ENCODE measurements at regions of chr17 and their contacts with region 1.

Region 1: DNA sequence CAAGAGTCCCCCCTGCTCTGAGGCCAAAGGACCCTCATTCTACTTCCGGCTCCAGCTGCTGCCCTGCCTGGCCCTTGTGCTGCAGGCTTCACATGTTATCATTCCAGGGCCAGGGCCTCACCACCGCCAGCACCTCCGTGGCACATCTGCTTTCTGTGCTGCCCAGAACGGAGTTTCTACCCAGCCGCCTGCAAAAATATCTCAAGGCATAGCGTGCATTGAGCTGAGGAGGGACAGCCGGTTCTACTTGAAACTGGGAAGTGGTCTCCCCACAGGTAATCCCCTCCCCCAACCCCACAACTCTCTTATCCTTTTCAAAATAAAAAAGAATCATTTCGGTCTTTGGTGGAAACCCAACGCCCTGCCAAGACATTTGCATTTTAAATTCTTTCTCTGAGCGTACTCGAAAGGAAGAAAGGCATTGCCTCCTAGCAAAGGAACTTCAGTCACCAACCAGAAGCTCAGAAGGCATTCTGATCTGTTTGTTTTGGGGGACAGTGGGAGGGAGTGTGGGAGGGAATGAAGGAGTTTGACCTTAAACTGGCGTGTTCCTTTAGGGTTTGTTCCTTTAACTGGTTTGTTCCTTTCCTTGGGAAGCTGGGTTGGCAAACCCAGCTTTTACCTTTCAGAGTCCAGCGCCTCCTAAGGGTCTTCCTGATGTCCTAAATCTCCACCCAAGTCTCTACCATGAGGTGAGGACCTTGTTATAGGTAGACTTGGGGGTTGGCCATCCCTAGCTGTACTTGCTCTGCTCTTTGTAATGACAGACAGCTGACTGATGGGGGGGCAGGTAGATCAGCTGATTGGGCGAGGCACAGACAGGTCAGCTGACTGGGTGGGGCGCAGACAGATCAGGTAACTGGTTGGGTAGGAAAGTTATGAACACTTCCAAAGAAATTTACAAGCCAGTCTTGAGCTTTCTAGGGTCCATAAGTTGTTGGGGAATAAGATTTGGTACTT is 33.4 kb upstream of the PIK3R6 start:
- DNase-seq: no peak
- H3K4me3 ChIP-seq: no peak overlapping the region
- H3K27ac ChIP-seq: no peak overlapping the region
- H3K4me1 ChIP-seq: no peaks in the 10 kb centered on the region
- H3K27me3 ChIP-seq: no peaks in the 10 kb centered on the region
- CTCF ChIP-seq: no peak
- EP300 ChIP-seq: no peak
- POLR2A ChIP-seq: no peak

Region 2: GRCh38 chr17:9350080-9350479 is 449.2 kb after region 1 on chr17:
- intact Hi-C with region 1: loop called in 1 of 4 experiments (anchors 10 kb)
- DNase-seq: no peak
- H3K4me3 ChIP-seq: no peak overlapping the region
- H3K27ac ChIP-seq: no peak overlapping the region
- H3K4me1 ChIP-seq: no peaks in the 10 kb centered on the region
- H3K27me3 ChIP-seq: no peaks in the 10 kb centered on the region
- CTCF ChIP-seq: no peak
- EP300 ChIP-seq: no peak
- POLR2A ChIP-seq: no peak